B cell (primary cell): ENCODE measurements at regions of chr11 and their contacts with region 1.

Region 1: DNA sequence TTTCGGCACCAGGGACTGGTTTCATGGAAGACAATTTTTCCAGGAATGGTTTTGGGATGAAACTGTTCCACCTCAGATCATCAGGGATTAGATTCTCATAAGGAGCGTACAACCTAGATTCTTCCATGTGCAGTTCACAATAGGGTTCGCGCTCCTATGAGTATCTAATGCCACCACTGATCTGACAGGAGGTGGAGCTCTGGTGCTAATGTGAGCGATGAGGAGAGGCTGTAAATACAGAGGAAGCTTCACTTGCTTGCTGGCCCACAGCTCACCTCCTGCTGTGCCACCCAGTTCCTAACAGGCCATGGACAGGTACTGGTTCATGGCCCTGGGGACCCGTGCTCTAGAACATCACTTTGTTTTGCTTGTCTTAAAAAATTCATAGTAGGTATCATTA is 41.8 kb upstream of the AMPD3 start:
- DNase-seq: peak; percentile 83
- ATAC-seq: peak; percentile 88
- H3K4me3 ChIP-seq: no peak overlapping the region
- H3K4me3 Mint-ChIP-seq: no peak overlapping the region
- H3K27ac ChIP-seq: no peak overlapping the region
- H3K27ac Mint-ChIP-seq: no peak overlapping the region
- H3K4me1 ChIP-seq: peaks cover 19 to 26% of the 10 kb centered on the region in 2 donors
- H3K4me1 Mint-ChIP-seq: peaks cover 26% of the 10 kb centered on the region
- H3K27me3 ChIP-seq: no peaks in the 10 kb centered on the region
- H3K27me3 Mint-ChIP-seq: no peaks in the 10 kb centered on the region
- CTCF ChIP-seq: peak; percentile 59

Region 2: GRCh38 chr11:10155793-10156490 is 257.3 kb before region 1 on chr11:
- CTCF ChIA-PET with region 1: no interaction called
- POLR2A ChIA-PET with region 1: no interaction called
- intact Hi-C with region 1: no loop called
- DNase-seq: no peak
- ATAC-seq: no peak
- H3K4me3 ChIP-seq: no peak overlapping the region
- H3K4me3 Mint-ChIP-seq: no peak overlapping the region
- H3K27ac ChIP-seq: no peak overlapping the region
- H3K27ac Mint-ChIP-seq: no peak overlapping the region
- H3K4me1 ChIP-seq: no peaks in the 10 kb centered on the region
- H3K4me1 Mint-ChIP-seq: no peaks in the 10 kb centered on the region
- H3K27me3 ChIP-seq: no peaks in the 10 kb centered on the region
- H3K27me3 Mint-ChIP-seq: peaks cover 8% of the 10 kb centered on the region
- CTCF ChIP-seq: no peak

Region 3: DNA sequence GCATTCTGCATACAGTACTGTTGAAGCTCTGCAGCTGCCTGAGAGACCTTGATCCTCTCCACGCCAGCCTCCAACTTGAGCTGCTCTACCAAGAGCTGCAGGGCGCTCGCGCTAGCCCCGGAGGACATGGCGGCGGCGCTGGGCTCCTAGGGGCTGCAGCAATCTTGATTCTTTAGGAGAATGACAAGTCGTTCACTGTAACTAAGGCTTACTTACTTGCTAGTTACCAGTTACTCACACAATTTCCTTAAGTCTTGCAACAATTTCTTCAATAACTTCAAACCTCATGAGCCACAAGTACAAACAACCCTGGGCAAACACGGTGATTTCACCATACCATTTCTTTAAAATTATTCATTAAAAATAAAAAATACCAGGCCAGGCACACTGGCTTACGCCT is 141.1 kb before region 1 on chr11:
- CTCF ChIA-PET with region 1: no interaction called
- POLR2A ChIA-PET with region 1: no interaction called
- intact Hi-C with region 1: no loop called
- DNase-seq: no peak
- ATAC-seq: no peak
- H3K4me3 ChIP-seq: no peak overlapping the region
- H3K4me3 Mint-ChIP-seq: no peak overlapping the region
- H3K27ac ChIP-seq: no peak overlapping the region
- H3K27ac Mint-ChIP-seq: no peak overlapping the region
- H3K4me1 ChIP-seq: peaks cover 0 to 4% of the 10 kb centered on the region in 2 donors
- H3K4me1 Mint-ChIP-seq: peaks cover 3% of the 10 kb centered on the region
- H3K27me3 ChIP-seq: no peaks in the 10 kb centered on the region
- H3K27me3 Mint-ChIP-seq: peaks cover 7% of the 10 kb centered on the region
- CTCF ChIP-seq: no peak

Region 4: GRCh38 chr11:10429526-10429925 is 16.3 kb after region 1 on chr11:
- CTCF ChIA-PET with region 1: interaction called, 13 read pairs
- POLR2A ChIA-PET with region 1: no interaction called
- intact Hi-C with region 1: no loop called
- DNase-seq: no peak
- ATAC-seq: no peak
- H3K4me3 ChIP-seq: no peak overlapping the region
- H3K4me3 Mint-ChIP-seq: no peak overlapping the region
- H3K27ac ChIP-seq: no peak overlapping the region
- H3K27ac Mint-ChIP-seq: no peak overlapping the region
- H3K4me1 ChIP-seq: no peaks in the 10 kb centered on the region
- H3K4me1 Mint-ChIP-seq: no peaks in the 10 kb centered on the region
- H3K27me3 ChIP-seq: peaks cover 0 to 4% (median 0%) of the 10 kb centered on the region in 4 experiments
- H3K27me3 Mint-ChIP-seq: peaks cover 6% of the 10 kb centered on the region
- CTCF ChIP-seq: no peak

Region 5: DNA sequence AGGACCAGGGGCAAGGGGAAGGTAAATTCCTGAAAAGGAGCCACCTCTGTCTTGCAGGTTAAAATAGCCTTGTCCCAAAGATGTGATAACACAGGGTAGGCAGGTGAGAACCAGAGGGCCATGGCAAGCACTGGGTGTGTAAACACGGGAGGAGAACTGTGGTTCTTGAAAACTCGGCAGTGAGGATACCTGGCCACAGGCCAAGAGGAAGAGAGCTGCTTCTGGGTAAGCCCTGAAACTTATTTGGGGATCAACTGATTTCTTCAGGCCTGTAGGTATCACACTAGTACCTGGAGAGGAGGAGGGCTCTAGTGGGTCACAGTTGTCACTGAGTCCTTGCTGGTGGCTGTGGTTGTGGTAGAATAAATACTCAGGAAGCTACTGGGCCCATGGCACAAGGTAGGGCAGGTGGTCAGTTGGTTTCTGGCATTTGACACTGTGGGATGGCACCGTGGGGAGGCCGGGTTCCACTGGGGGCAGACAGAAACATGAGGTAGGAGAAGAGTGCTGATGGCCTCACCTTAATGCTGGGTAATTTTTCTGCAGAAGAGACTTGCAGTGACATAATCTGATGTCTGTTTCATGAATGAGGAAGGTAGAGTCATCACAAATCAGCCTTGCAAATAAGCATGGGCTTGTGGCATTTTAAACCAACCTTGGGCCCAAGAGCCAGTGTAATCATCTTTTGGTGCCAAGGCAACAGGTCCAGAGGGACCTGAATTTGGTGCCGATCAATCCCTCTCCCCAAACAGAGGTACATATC is 63.8 kb after region 1 on chr11:
- CTCF ChIA-PET with region 1: interaction called, 10 read pairs
- POLR2A ChIA-PET with region 1: no interaction called
- intact Hi-C with region 1: no loop called
- DNase-seq: peak; percentile 28
- ATAC-seq: peak; percentile 50
- H3K4me3 ChIP-seq: no peak overlapping the region
- H3K4me3 Mint-ChIP-seq: no peak overlapping the region
- H3K27ac ChIP-seq: peak overlapping the region; percentile 5 to 74
- H3K27ac Mint-ChIP-seq: peak overlapping the region; percentile 61
- H3K4me1 ChIP-seq: peaks cover 15 to 16% of the 10 kb centered on the region in 2 donors
- H3K4me1 Mint-ChIP-seq: peaks cover 46% of the 10 kb centered on the region
- H3K27me3 ChIP-seq: no peaks in the 10 kb centered on the region
- H3K27me3 Mint-ChIP-seq: no peaks in the 10 kb centered on the region
- CTCF ChIP-seq: no peak

Region 6: DNA sequence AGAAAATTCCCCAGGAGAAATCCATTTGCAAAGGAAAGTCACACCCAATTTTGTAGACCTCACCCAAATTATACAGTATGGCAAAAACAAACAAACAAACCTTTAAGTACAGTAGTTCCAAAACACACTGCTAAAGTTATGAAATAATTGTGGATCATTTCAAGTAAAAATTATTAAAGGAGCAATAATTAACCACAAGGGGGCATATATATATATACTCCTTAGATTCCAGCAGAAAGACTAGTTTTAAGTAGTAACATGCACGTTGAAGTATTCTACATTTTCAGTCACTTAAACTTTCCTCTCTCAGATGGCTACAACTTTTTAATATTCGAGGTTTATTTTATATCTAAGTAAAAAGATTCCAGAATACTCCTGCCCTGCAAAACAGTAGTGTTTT is 100.9 kb after region 1 on chr11:
- CTCF ChIA-PET with region 1: interaction called, 71 read pairs
- POLR2A ChIA-PET with region 1: no interaction called
- intact Hi-C with region 1: loop called (anchors 1 kb)
- DNase-seq: peak; percentile 42
- ATAC-seq: no peak
- H3K4me3 ChIP-seq: no peak overlapping the region
- H3K4me3 Mint-ChIP-seq: no peak overlapping the region
- H3K27ac ChIP-seq: peak overlapping the region in 1 of 2 donors; percentile 7
- H3K27ac Mint-ChIP-seq: peak overlapping the region; percentile 43
- H3K4me1 ChIP-seq: no peaks in the 10 kb centered on the region
- H3K4me1 Mint-ChIP-seq: peaks cover 16% of the 10 kb centered on the region
- H3K27me3 ChIP-seq: no peaks in the 10 kb centered on the region
- H3K27me3 Mint-ChIP-seq: no peaks in the 10 kb centered on the region
- CTCF ChIP-seq: peak; percentile 62

Region 7: GRCh38 chr11:10641177-10641911 is 228.1 kb after region 1 on chr11:
- CTCF ChIA-PET with region 1: interaction called, 11 read pairs
- POLR2A ChIA-PET with region 1: no interaction called
- intact Hi-C with region 1: no loop called
- DNase-seq: peak; percentile 77
- ATAC-seq: peak; percentile 87
- H3K4me3 ChIP-seq: peak overlapping the region in 1 of 5 experiments; percentile 35
- H3K4me3 Mint-ChIP-seq: peak overlapping the region; percentile 74
- H3K27ac ChIP-seq: peak overlapping the region; percentile 87 to 88
- H3K27ac Mint-ChIP-seq: peak overlapping the region; percentile 94
- H3K4me1 ChIP-seq: peaks cover 55 to 79% of the 10 kb centered on the region in 2 donors
- H3K4me1 Mint-ChIP-seq: peaks cover 81% of the 10 kb centered on the region
- H3K27me3 ChIP-seq: no peaks in the 10 kb centered on the region
- H3K27me3 Mint-ChIP-seq: no peaks in the 10 kb centered on the region
- CTCF ChIP-seq: no peak

Region 8: GRCh38 chr11:10735481-10736475 is 322.5 kb after region 1 on chr11:
- CTCF ChIA-PET with region 1: interaction called, 171 read pairs
- POLR2A ChIA-PET with region 1: no interaction called
- intact Hi-C with region 1: loop called (anchors 1 kb)
- DNase-seq: peak; percentile 92
- ATAC-seq: peak; percentile 100
- H3K4me3 ChIP-seq: peak overlapping the region in 2 of 5 experiments; percentile 25 to 28
- H3K4me3 Mint-ChIP-seq: peak overlapping the region; percentile 86
- H3K27ac ChIP-seq: peak overlapping the region; percentile 22 to 35
- H3K27ac Mint-ChIP-seq: peak overlapping the region; percentile 95
- H3K4me1 ChIP-seq: peaks cover 7 to 13% of the 10 kb centered on the region in 2 donors
- H3K4me1 Mint-ChIP-seq: peaks cover 13% of the 10 kb centered on the region
- H3K27me3 ChIP-seq: no peaks in the 10 kb centered on the region
- H3K27me3 Mint-ChIP-seq: no peaks in the 10 kb centered on the region
- CTCF ChIP-seq: peak; percentile 94